HCT116 (cell line): ENCODE measurements at regions of chr14 and their contacts with region 1.

Region 1: DNA sequence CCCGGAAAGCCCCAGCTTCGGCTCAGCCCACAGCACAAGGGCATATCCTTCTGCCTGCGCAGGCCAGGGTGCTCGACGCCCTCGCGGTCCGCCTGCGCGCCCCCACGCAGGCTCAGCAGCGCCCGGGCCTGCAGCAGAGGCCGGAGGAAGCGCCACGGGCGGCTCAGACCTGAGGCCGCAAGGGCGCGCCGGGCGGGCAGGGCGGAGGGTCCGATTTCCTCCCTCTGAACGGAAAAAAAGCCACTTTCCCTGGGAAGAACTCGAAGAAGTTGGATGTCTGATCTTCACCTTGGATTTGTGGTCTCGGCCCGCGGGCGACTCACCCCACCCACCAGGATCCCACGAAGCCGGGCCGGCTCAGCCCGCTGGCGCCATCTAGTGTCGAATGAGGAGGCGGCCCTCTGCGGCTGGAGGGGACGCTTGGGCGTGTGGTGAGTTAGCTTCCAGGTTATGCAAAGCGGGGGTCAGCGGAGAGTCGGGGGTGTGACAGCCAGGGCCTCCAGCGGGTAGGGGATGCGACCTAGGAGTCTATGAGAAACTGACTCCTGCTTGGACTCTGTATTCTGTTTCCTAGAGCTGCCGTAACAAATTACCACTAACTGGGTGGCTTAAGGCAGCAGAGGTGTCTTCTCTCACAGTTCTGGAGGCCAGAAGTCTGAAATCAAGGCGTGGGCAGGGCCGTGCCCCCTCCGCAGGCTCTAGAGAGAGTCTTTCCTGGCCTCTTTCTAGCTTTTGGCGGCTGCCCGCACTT is 40.0 kb upstream of the SRSF5 start:
- DNase-seq: no peak
- ATAC-seq: peak; percentile 95
- H3K4me3 ChIP-seq: peak overlapping the region; percentile 17 to 49; a peak in 3 of 4 replicates
- H3K27ac ChIP-seq: peak overlapping the region; percentile 29; the same call in 1 of the 2 replicates
- H3K4me1 ChIP-seq: peaks cover 0 to 8% of the 10 kb centered on the region in 2 experiments; a peak in 3 of 4 replicates
- H3K27me3 ChIP-seq: no peaks in the 10 kb centered on the region
- CTCF ChIP-seq: peak; percentile 94 to 98 (median 97)
- POLR2A ChIP-seq: no peak
- RAD21 ChIP-seq: peak; percentile 99

Region 2: GRCh38 chr14:69580009-69580577 is 146.8 kb before region 1 on chr14:
- CTCF ChIA-PET with region 1: interaction called, 25 read pairs
- POLR2A ChIA-PET with region 1: no interaction called
- RAD21 ChIA-PET with region 1: interaction called, 4 to 6 read pairs
- intact Hi-C with region 1: loop called (anchors 1 kb)
- DNase-seq: peak; percentile 37
- ATAC-seq: peak; percentile 87
- H3K4me3 ChIP-seq: no peak overlapping the region
- H3K27ac ChIP-seq: no peak overlapping the region
- H3K4me1 ChIP-seq: no peaks in the 10 kb centered on the region
- H3K27me3 ChIP-seq: no peaks in the 10 kb centered on the region
- CTCF ChIP-seq: peak; percentile 52 to 80 (median 69); a peak in 5 of 6 replicates
- POLR2A ChIP-seq: no peak
- RAD21 ChIP-seq: peak; percentile 49

Region 3: DNA sequence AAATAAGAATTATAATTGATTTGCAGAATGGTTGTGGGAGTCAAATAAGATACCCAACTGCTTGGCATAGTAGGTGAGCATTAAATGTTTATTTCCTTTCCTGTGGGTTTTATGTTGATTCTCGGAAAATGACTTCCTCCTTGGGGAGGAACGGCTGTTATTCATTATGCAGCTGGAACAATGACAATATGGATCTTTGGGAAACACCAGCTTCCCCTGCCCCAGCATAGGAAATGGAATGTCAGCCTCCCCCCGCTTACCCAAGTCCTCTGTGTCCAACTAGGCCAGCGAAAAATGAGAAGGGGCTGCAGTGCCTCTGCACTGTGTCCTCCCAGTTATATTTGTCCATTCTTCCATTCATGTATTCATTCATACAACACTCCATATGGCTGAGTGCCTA is 140.5 kb before region 1 on chr14:
- CTCF ChIA-PET with region 1: interaction called, 25 read pairs
- POLR2A ChIA-PET with region 1: no interaction called
- RAD21 ChIA-PET with region 1: interaction called in 1 of 2 experiments, 6 read pairs
- intact Hi-C with region 1: loop called (anchors 1 kb)
- DNase-seq: no peak
- ATAC-seq: no peak
- H3K4me3 ChIP-seq: no peak overlapping the region
- H3K27ac ChIP-seq: no peak overlapping the region
- H3K4me1 ChIP-seq: no peaks in the 10 kb centered on the region
- H3K27me3 ChIP-seq: no peaks in the 10 kb centered on the region
- CTCF ChIP-seq: no peak
- POLR2A ChIP-seq: no peak
- RAD21 ChIP-seq: no peak

Region 4: DNA sequence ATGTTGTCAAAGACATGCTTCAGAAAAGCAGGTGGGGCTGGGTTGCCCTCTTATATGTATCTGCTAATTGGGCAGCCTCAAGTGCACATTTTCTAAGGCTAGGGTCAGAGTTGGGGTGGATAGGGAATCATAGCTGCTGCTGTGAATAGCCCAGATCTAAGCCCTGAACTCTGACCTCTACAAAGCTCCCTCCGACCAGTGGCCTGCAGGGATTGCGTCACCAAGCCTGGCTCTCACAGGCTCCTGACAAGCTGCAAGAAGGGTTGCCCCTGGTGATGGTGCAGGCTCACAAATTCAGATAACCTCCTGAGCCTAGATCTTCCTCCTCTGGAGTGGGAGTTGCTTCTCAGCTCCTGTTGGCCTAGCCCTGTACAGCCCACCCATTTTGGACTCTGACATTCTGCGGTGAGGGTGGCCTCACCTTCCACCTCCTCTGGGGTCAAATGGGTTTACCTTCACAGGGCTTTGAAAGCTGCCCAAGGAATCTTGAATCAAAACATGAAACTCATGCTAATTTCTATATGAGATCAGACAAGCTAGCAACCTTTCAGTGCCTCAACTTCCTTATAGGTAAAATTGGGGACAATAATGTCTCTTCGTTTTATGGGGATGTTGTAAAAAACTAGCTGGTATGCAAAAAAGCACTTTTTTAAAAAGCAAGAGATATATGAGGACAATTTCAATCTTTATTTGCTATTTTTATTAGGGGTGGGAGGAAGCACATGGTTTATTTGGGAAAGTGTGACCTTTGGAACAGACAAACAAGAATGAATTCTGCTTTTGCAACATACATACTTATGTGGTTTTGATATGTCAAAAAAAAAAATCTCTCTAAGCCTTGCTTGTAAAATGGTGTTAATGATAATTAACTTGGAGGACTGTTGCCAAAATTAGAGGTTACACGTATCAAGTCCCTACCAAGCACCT is 120.4 kb before region 1 on chr14:
- CTCF ChIA-PET with region 1: interaction called, 3 read pairs
- POLR2A ChIA-PET with region 1: interaction called, 3 read pairs
- RAD21 ChIA-PET with region 1: interaction called in 1 of 2 experiments, 3 read pairs
- intact Hi-C with region 1: loop called (anchors 1 kb)
- DNase-seq: no peak
- ATAC-seq: no peak
- H3K4me3 ChIP-seq: no peak overlapping the region
- H3K27ac ChIP-seq: no peak overlapping the region
- H3K4me1 ChIP-seq: peaks cover 14 to 17% of the 10 kb centered on the region in 2 experiments
- H3K27me3 ChIP-seq: no peaks in the 10 kb centered on the region
- CTCF ChIP-seq: no peak
- POLR2A ChIP-seq: no peak
- RAD21 ChIP-seq: no peak